GM23248 (cell line): ENCODE measurements at regions of chr6 and their contacts with region 1.

Region 1: GRCh38 chr6:593139-593906 is 63.6 kb downstream of the HUS1B start:
- DNase-seq: peak; percentile 73
- H3K4me3 ChIP-seq: no peak overlapping the region
- H3K27ac ChIP-seq: no peak overlapping the region
- H3K4me1 ChIP-seq: no peaks in the 10 kb centered on the region
- H3K27me3 ChIP-seq: no peaks in the 10 kb centered on the region

Region 2: GRCh38 chr6:391559-392440 is 201.5 kb before region 1 on chr6 and contains the start of gene IRF4:
- in situ Hi-C with region 1: no loop called
- DNase-seq: peak; percentile 28
- H3K4me3 ChIP-seq: peak within 1 kb of the TSS; percentile 39; the same call in 1 of the 2 replicates
- H3K27ac ChIP-seq: no peak within 1 kb of the TSS
- H3K4me1 ChIP-seq: no peaks in the 10 kb centered on the region
- H3K27me3 ChIP-seq: peaks cover 74% of the 10 kb centered on the region
- total RNA-seq, gene IRF4: not detected in 2 replicates

Region 3: GRCh38 chr6:786946-787763 is 193.8 kb after region 1 on chr6:
- in situ Hi-C with region 1: loop called (anchors 10 kb)
- DNase-seq: peak; percentile 53
- H3K4me3 ChIP-seq: no peak overlapping the region
- H3K27ac ChIP-seq: no peak overlapping the region
- H3K4me1 ChIP-seq: no peaks in the 10 kb centered on the region
- H3K27me3 ChIP-seq: 0 out of 2 replicates have a peak, but pooled peaks cover 6% of the 10 kb centered on the region

Region 4: DNA sequence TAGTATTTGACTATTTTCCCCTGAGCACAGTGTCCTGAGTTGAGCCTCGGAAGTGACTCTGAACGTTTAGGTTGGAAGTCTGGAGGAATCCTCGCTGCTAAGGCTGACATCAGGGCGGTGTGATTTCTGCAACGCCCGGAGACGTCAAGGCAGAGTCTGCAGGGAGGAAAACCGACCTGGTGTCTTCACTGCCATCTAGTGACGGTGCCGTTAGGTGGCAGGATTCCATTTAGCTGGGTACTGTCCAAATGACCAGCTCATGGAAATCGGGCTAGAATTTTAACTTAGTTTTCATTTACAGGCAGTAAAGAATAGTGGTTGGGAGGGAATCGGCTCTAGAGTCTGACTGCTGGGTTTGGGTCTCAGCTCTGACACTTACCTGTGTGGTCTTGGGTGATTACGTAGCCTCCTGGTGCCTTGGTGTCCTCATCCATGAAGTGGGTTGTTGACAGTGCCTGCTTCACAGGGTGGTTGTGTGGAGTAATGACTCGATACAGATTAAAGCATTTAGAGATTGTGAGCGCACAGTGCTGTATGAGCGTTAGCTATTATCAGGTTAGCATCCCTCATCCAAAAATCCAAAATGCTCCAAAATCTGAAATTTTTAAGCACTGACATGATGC is 831.1 kb after region 1 on chr6:
- in situ Hi-C with region 1: loop called (anchors 25 kb)
- DNase-seq: peak; percentile 86
- H3K4me3 ChIP-seq: no peak overlapping the region
- H3K27ac ChIP-seq: no peak overlapping the region
- H3K4me1 ChIP-seq: 0 out of 2 replicates have a peak, but pooled peaks cover 6% of the 10 kb centered on the region
- H3K27me3 ChIP-seq: peaks cover 19% of the 10 kb centered on the region